PC-3 (cell line): ENCODE measurements at regions of chr5 and their contacts with region 1.

Region 1: DNA sequence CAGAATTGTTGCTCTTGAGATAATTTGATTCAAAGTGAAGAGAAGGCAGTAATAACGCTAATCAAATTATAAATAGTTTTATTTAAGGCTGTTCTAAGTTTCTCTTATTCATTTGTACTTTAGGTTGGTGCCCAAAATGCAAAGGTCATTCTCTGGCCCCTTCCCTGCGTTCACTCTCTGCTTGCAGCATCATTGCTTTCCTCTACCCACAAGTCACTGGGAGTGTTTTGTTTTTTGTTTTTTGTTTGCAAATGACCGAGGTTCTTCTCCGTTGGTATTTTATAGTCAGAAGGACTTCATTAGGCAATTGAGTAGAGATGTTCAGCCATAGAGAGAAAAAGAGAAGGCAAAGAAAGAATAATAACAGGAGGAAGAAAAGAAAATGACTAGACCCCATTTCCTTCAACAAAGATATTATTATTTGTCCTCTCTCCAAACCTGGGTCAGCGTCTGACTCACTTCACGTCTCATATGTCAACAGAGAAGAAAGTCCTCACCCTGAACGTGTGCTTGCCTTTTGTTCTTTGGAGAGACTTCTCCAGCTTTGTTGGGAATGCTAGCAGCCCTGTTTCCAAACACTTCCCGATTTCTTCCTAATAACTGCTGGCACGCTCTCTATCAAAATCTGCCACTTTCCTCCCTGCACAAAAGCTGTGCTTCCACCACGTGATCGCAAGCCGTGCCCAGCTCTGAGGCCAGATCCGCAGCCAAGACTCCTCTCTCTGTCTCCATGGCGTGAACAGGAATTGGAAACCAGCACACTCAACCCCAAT is 119.8 kb downstream of the EBF1 start:
- DNase-seq: peak; percentile 62
- ATAC-seq: peak; percentile 79
- H3K4me3 ChIP-seq: peak overlapping the region; percentile 60
- H3K27ac ChIP-seq: peak overlapping the region; percentile 60
- H3K4me1 ChIP-seq: peaks cover 40% of the 10 kb centered on the region
- H3K27me3 ChIP-seq: no peaks in the 10 kb centered on the region
- CTCF ChIP-seq: no peak

Region 2: DNA sequence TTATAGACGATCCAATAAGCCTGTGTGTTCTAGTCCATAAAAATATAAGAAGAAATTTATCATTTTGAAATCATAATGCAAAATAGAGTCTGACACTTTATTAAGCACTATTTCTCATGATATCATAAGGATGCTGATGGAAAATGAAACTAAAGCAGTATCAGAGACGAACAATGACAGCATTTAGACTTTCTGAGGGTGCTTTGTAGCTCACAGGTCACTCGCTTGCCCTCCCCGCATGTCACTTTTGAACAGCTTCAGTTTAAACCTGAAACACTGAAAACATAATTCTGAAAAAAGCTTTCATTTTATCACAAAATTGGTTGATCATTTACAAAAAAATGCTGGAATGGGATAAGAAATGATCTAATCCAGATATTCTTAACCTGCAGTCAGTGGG is 127.3 kb before region 1 on chr5:
- CTCF ChIA-PET with region 1: no interaction called
- POLR2A ChIA-PET with region 1: no interaction called
- intact Hi-C with region 1: loop called (anchors 10 kb)
- DNase-seq: no peak
- ATAC-seq: no peak
- H3K4me3 ChIP-seq: no peak overlapping the region
- H3K27ac ChIP-seq: no peak overlapping the region
- H3K4me1 ChIP-seq: peaks cover 28% of the 10 kb centered on the region
- H3K27me3 ChIP-seq: no peaks in the 10 kb centered on the region
- CTCF ChIP-seq: no peak

Region 3: DNA sequence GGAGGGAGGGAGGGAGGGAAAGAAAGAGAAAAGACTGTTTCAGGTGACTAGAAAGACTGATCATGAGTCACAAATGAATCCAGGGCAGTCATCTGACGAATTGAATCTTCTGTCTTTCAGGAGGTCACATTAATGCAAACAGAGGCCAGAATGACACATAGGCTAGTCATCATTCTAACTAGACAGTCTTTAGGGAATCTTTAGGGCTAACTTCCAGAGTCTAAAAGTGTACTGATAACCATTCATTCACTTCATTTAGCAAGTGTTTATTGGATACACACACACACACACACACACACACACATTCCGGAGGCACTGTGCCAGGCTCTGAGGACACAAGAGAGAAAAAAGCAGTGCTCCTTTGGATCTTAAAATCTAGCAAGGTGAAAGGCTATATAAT is 36.9 kb before region 1 on chr5:
- CTCF ChIA-PET with region 1: no interaction called
- POLR2A ChIA-PET with region 1: no interaction called
- intact Hi-C with region 1: loop called (anchors 5 kb)
- DNase-seq: peak; percentile 91
- ATAC-seq: peak; percentile 96
- H3K4me3 ChIP-seq: no peak overlapping the region
- H3K27ac ChIP-seq: peak overlapping the region; percentile 51; the same call in 1 of the 2 replicates
- H3K4me1 ChIP-seq: peaks cover 12% of the 10 kb centered on the region
- H3K27me3 ChIP-seq: no peaks in the 10 kb centered on the region
- CTCF ChIP-seq: no peak

Region 4: GRCh38 chr5:159003037-159004030 is 23.4 kb after region 1 on chr5:
- CTCF ChIA-PET with region 1: no interaction called
- POLR2A ChIA-PET with region 1: no interaction called
- intact Hi-C with region 1: loop called (anchors 2 kb)
- DNase-seq: peak; percentile 77
- ATAC-seq: peak; percentile 93
- H3K4me3 ChIP-seq: no peak overlapping the region
- H3K27ac ChIP-seq: peak overlapping the region; percentile 75
- H3K4me1 ChIP-seq: peaks cover 19% of the 10 kb centered on the region
- H3K27me3 ChIP-seq: no peaks in the 10 kb centered on the region
- CTCF ChIP-seq: no peak

Region 5: GRCh38 chr5:159049844-159050315 is 69.9 kb after region 1 on chr5:
- CTCF ChIA-PET with region 1: no interaction called
- POLR2A ChIA-PET with region 1: no interaction called
- intact Hi-C with region 1: loop called (anchors 5 kb)
- DNase-seq: peak; percentile 33
- ATAC-seq: peak; percentile 62
- H3K4me3 ChIP-seq: no peak overlapping the region
- H3K27ac ChIP-seq: no peak overlapping the region
- H3K4me1 ChIP-seq: no peaks in the 10 kb centered on the region
- H3K27me3 ChIP-seq: no peaks in the 10 kb centered on the region
- CTCF ChIP-seq: peak; percentile 49

Region 6: GRCh38 chr5:159362220-159362619 is 382.3 kb after region 1 on chr5:
- CTCF ChIA-PET with region 1: no interaction called
- POLR2A ChIA-PET with region 1: no interaction called
- intact Hi-C with region 1: no loop called
- DNase-seq: no peak
- ATAC-seq: no peak
- H3K4me3 ChIP-seq: no peak overlapping the region
- H3K27ac ChIP-seq: no peak overlapping the region
- H3K4me1 ChIP-seq: no peaks in the 10 kb centered on the region
- H3K27me3 ChIP-seq: no peaks in the 10 kb centered on the region
- CTCF ChIP-seq: no peak